ENCODE measurements at regions of chr7 and their contacts with region 1.

Region 1: GRCh38 chr7:27160546-27161213 is 4.2 kb upstream of the HOXA7 start:
- DNase-seq: peak; percentile 88 to 90
- H3K4me3 ChIP-seq: peak overlapping the region; percentile 49
- H3K27ac ChIP-seq: peak overlapping the region; percentile 94 to 96
- H3K4me1 ChIP-seq: no peaks in the 10 kb centered on the region
- H3K27me3 ChIP-seq: no peaks in the 10 kb centered on the region
- CTCF ChIP-seq: peak; percentile 97 to 100 (median 100)
- POLR2A ChIP-seq: no peak

Region 2: GRCh38 chr7:26857510-26858240 is 303.0 kb before region 1 on chr7:
- intact Hi-C with region 1: loop called (anchors 5 kb)
- DNase-seq: no peak
- H3K4me3 ChIP-seq: no peak overlapping the region
- H3K27ac ChIP-seq: peak overlapping the region in 1 of 2 donors; percentile 30
- H3K4me1 ChIP-seq: no peaks in the 10 kb centered on the region
- H3K27me3 ChIP-seq: peaks cover 32 to 91% of the 10 kb centered on the region in 2 donors
- CTCF ChIP-seq: no peak
- POLR2A ChIP-seq: no peak

Region 3: GRCh38 chr7:27242555-27243339 is 82.1 kb after region 1 on chr7 and contains the start of gene EVX1:
- intact Hi-C with region 1: no loop called
- DNase-seq: no peak
- H3K4me3 ChIP-seq: peak within 1 kb of the TSS in 1 of 2 donors; percentile 16
- H3K27ac ChIP-seq: no peak within 1 kb of the TSS
- H3K4me1 ChIP-seq: peaks cover 0 to 28% of the 10 kb centered on the region in 2 donors
- H3K27me3 ChIP-seq: peaks cover 45 to 73% of the 10 kb centered on the region in 2 donors
- CTCF ChIP-seq: no peak
- POLR2A ChIP-seq: no peak
- total RNA-seq, gene EVX1: 0.21 TPM in 1 of 4 donors, not detected in the others

Region 4: DNA sequence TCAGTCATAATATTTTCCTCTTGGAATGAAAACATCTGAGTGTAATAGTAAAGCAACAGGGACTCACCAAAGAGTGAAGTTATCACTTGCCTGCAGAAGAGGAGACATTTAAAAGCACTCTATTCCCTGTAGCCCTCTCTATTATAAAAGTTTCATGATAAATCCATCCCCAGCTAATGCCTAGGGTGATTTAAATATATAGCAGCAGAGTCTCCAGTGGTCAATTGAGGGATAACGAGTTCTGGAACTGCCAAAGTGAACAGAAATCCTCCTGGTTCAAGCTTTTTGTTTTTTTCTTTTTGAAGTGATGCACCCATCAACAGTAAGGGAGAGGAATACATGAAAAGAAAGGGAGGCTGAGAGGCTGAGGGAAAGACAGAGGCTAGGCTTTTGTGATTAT is 169.2 kb after region 1 on chr7:
- intact Hi-C with region 1: no loop called
- DNase-seq: no peak
- H3K4me3 ChIP-seq: no peak overlapping the region
- H3K27ac ChIP-seq: no peak overlapping the region
- H3K4me1 ChIP-seq: no peaks in the 10 kb centered on the region
- H3K27me3 ChIP-seq: no peaks in the 10 kb centered on the region
- CTCF ChIP-seq: peak in 1 of 4 experiments; percentile 11
- POLR2A ChIP-seq: no peak

Region 5: DNA sequence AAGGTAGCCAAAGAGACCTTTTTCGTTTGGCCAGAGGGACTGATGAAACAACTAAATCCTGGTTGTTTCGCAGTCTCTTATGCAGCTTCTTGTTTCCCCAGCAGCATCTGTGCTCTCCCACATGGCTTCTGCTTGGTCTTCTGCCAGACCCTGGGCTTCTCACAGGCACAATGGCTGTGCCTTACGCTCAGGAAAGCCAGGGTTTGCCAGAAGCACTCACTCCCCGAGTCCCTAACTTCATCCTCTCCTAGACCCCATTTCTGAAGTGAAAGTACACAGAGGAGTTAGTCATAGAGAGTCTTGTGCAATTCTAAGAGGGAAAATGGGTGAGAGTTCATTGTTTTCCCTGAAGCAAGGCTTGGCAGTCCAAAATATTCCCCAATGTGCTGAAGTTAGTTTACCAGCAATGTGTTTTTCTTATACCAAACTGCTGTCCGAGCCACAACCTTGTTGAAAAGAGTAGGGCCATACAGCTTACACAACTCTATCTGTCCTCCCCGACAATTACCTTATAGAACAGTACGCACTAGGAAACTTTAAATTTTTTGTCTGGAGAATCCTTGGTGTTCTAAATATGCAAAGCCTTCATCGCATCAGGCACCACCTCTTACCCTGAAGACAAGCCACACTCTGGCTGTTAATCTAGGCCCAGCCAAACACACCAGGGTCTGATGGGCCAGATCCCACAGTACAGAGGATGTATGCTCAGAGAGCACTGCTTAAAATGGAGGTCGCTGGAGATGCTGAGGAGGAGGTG is 203.8 kb after region 1 on chr7:
- intact Hi-C with region 1: no loop called
- DNase-seq: peak; percentile 89 to 94
- H3K4me3 ChIP-seq: peak overlapping the region in 1 of 2 donors; percentile 12
- H3K27ac ChIP-seq: peak overlapping the region; percentile 90 to 96
- H3K4me1 ChIP-seq: peaks cover 0 to 4% of the 10 kb centered on the region in 2 donors
- H3K27me3 ChIP-seq: no peaks in the 10 kb centered on the region
- CTCF ChIP-seq: no peak
- POLR2A ChIP-seq: peak in 1 of 2 donors; percentile 35

Region 6: DNA sequence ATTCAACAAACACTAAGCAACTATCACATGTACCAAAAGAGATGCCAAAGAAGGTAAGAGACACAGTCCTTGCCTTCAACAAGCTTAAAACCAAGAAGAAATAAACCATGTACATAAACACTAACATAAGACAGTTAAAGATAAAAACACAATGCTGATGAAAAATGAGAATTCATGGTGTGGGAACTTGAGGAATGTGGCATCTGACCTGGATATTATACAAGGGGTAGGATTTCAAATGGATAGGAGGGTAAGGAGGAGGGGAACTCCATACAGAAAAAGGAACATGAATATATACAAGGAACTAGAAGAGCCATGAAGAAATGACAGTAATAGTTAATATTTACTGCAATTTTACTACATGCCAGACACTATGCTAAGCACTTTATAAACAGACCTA is 491.0 kb after region 1 on chr7:
- intact Hi-C with region 1: no loop called
- DNase-seq: no peak
- H3K4me3 ChIP-seq: no peak overlapping the region
- H3K27ac ChIP-seq: no peak overlapping the region
- H3K4me1 ChIP-seq: peaks cover 0 to 3% of the 10 kb centered on the region in 2 donors
- H3K27me3 ChIP-seq: no peaks in the 10 kb centered on the region
- CTCF ChIP-seq: no peak
- POLR2A ChIP-seq: no peak